Body of pancreas (tissue), 4 donors: ENCODE measurements at regions of chr2 and their contacts with region 1.

Region 1: DNA sequence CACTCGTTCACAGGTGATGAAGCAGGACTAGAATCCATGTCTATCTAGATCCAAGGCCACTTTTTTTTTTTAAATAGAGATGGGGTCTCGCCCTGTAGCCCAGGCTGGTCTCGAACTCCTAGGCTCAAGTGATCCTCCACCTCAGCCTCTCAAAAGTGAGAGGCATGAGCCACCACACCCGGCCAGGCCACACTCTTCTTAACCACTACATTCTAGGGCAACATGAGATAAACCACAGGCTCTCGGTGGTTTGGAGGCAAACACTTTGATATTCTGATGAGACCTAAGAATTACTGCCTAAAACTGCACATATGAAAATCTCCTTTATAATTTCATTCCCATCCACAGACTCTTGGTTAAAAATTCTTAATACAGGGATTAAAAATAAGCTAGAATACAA is 51.8 kb downstream of the USP34 start:
- DNase-seq: no peak
- ATAC-seq: no peak
- H3K4me3 ChIP-seq: no peak overlapping the region
- H3K27ac ChIP-seq: no peak overlapping the region
- H3K4me1 ChIP-seq: peaks cover 30% of the 10 kb centered on the region
- H3K27me3 ChIP-seq: no peaks in the 10 kb centered on the region
- CTCF ChIP-seq: no peak
- POLR2A ChIP-seq: no peak

Region 2: DNA sequence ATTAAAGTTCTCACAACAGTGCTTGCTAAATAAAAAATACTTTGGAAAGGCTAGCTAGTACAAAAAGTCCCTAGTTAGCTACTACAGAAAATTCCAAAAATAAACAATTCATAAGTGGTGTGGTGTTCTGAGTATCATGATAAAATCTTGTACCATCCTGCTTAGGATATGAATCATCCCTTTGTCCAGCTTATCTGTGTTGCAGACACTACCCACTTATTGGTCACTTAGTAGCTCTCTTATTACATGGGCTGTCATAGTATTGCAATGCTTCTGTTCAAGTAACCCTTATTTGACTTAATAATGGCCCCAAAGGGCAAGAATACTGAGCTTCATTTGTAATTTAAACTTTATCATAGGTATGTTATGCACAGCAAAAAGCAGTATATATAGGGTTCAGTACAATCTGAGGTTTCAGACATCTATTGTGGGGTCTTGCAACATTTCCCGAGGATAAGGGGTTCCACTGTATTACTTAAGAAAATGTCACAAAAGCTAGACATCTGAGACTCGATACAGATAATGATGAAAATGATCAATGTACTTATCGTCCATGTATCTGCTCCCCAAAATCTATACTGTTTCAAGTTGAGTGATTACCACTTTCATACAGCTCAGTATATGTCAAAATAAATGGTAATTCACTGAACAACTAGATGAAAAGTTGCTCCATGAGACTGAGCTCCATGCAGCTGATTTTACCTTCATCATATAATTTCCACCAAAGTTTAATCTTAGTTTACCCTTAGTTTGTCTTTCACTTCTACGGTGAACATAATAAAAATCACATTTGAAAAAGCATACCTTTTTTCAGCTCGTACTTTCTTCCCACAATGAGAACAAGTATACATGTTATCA is 163.3 kb before region 1 on chr2:
- intact Hi-C with region 1: no loop called
- DNase-seq: no peak
- ATAC-seq: no peak
- H3K4me3 ChIP-seq: no peak overlapping the region
- H3K27ac ChIP-seq: no peak overlapping the region
- H3K4me1 ChIP-seq: no peaks in the 10 kb centered on the region
- H3K27me3 ChIP-seq: no peaks in the 10 kb centered on the region
- CTCF ChIP-seq: no peak
- POLR2A ChIP-seq: no peak

Region 3: GRCh38 chr2:61460163-61460562 is 41.0 kb after region 1 on chr2:
- intact Hi-C with region 1: loop called (anchors 10 kb)
- DNase-seq: no peak
- ATAC-seq: no peak
- H3K4me3 ChIP-seq: no peak overlapping the region
- H3K27ac ChIP-seq: no peak overlapping the region
- H3K4me1 ChIP-seq: peaks cover 41% of the 10 kb centered on the region
- H3K27me3 ChIP-seq: no peaks in the 10 kb centered on the region
- CTCF ChIP-seq: no peak
- POLR2A ChIP-seq: no peak

Region 4: DNA sequence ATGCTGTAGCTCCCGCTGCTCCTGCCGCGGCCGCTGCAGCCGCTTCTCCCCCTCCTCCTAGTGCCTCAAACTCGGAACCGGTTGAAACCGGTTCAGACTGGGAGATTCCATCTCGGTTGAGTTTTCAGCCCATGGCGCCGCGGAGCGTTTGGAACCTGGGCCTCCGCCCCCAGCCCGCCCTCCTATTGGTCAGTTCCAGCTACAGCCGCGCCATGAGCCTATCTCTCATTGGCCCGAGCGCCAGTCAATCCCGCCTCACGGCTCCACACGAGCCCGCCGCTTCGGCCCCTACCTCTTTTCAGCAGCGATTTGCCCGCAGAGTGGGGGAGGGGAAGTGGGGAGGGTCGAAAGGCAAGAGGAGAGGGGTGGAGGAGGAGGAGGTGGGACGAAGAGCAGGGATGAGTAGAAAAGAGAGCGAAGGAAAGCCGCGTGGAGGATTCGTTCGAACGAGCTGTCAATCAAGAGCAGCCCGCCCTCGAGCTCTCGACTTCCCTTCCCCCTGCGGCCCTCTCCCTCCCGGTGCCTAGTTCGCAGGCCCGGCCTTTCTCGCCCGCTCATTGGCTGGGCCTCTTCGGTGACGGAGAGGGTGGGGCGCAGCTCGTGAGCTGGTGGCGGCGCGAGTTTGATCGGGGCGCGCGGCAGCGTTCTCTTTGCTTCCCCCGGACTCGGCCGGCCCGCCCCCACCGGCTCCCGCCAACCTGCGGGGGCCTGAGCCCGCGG is 119.2 kb after region 1 on chr2 and contains the start of gene XPO1:
- intact Hi-C with region 1: no loop called
- DNase-seq: peak; percentile 99
- ATAC-seq: peak; percentile 90
- H3K4me3 ChIP-seq: peak within 1 kb of the TSS; percentile 77 to 85
- H3K27ac ChIP-seq: peak within 1 kb of the TSS; percentile 95 to 98 (median 97)
- H3K4me1 ChIP-seq: peaks cover 29% of the 10 kb centered on the region
- H3K27me3 ChIP-seq: no peaks in the 10 kb centered on the region
- CTCF ChIP-seq: no peak
- POLR2A ChIP-seq: peak; percentile 88 to 89 (median 88)
- total RNA-seq, gene XPO1: 55.7 to 70.0 TPM

Region 5: DNA sequence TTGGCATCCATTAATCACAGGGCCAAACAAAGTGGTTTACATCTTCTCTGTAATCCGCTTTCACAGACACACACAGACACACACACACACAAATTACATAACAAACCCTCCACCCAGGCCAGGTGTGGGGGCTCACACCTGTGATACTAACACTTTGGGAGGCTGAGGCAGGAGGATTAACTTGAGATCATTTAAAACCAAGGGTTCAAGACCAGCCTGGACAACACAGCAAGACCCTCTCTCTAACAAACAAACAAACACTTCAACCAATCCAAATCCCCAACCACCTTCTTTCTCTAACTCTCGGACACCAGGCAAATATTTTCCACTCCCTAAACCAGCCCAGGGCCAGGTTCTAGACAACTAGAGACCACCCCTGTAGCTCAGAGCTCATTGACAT is 198.5 kb after region 1 on chr2:
- intact Hi-C with region 1: no loop called
- DNase-seq: no peak
- ATAC-seq: no peak
- H3K4me3 ChIP-seq: no peak overlapping the region
- H3K27ac ChIP-seq: no peak overlapping the region
- H3K4me1 ChIP-seq: no peaks in the 10 kb centered on the region
- H3K27me3 ChIP-seq: no peaks in the 10 kb centered on the region
- CTCF ChIP-seq: no peak
- POLR2A ChIP-seq: no peak